Activated CD8-positive, alpha-beta memory T cell treated with anti-CD3 and anti-CD28 coated beads, Interleukin-2, amount 10 ng/mL, durations not matched to agents 7 days and 5 days (primary cell): ENCODE measurements at regions of chr3 and their contacts with region 1.

Region 1: DNA sequence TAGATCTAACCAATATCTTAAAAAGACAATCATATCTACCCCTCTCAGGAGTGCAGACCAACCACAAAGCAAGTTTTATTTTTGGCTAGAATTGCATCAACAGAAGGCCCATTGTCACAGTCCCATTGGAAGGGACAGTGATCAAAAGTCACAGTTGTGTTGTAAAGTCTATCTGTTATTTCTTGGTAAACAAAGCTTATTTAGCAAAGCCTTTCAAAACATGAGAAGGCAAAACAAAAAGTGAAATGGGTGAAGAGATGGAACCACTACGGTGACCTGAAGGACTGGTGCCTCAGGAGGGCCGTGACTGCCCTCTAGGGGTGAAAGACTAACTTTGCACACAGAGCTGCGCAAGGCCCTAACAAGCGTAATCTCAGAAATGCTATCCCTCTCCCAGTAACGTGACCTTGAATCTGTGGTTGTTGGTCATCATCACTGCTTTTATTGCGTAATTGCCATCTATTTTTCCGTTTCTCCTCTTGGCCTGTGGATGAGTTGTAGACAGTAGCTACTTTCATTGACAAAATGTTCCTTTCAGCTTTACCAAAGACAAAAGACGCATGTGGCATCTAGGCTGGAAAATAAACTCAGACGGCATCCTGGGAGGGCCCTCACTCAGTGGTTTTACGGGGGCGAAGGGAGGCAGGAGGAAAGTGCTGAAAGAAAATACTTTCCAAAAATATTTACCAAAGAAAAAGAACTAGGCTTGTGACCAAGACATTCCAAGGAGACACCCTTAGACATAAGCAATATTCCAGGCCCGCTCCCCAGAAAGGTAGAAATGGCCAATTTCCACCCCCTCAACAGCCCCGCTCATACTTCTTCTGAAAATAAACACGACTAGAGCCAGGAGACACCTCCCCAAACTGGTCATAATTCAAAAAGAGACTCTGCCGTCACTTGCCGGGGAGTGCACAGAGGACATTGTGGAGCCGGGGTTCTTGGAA is 79.4 kb downstream of the FRMD4B start:
- DNase-seq: peak; percentile 84
- ATAC-seq: peak; percentile 97
- H3K4me3 Mint-ChIP-seq: peak overlapping the region; percentile 52
- H3K27ac Mint-ChIP-seq: peak overlapping the region; percentile 81
- H3K4me1 Mint-ChIP-seq: peaks cover 19% of the 10 kb centered on the region
- H3K27me3 Mint-ChIP-seq: peaks cover 6% of the 10 kb centered on the region

Region 2: DNA sequence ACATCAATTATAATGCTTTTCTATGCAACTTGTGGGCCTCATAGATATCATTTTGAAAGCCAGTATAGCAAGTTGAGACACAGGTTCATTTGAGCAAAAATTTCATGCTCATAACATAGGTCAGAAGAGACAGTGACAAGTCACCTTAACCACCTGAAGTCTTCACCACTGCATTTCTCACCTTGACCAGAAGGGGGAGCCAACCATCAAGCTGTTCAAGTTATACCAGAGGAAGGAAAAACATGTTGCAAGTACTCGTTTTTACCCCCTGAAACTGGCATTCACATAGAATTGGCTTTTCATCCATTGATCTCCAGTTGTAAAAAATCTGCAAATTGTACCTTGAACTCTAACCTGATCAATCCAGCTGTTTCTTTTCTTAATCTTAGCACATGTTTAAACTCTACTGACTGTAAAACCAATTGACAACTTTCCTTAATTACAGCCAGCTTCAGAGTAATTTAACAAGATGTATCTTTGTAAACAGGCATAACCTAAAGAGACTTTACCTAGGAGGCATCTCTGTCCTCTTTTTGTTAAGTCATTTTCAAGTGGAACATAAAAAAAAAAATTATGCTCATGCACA is 185.5 kb before region 1 on chr3:
- CTCF ChIA-PET with region 1: interaction called, 45 read pairs
- DNase-seq: peak; percentile 90
- ATAC-seq: peak; percentile 87
- H3K4me3 Mint-ChIP-seq: no peak overlapping the region
- H3K27ac Mint-ChIP-seq: peak overlapping the region; percentile 7
- H3K4me1 Mint-ChIP-seq: peaks cover 2% of the 10 kb centered on the region
- H3K27me3 Mint-ChIP-seq: no peaks in the 10 kb centered on the region

Region 3: GRCh38 chr3:69174871-69175737 is 131.4 kb before region 1 on chr3:
- CTCF ChIA-PET with region 1: interaction called, 22 read pairs
- DNase-seq: no peak
- ATAC-seq: no peak
- H3K4me3 Mint-ChIP-seq: no peak overlapping the region
- H3K27ac Mint-ChIP-seq: peak overlapping the region; percentile 46
- H3K4me1 Mint-ChIP-seq: peaks cover 38% of the 10 kb centered on the region
- H3K27me3 Mint-ChIP-seq: no peaks in the 10 kb centered on the region

Region 4: GRCh38 chr3:69191516-69191915 is 115.0 kb before region 1 on chr3:
- CTCF ChIA-PET with region 1: interaction called, 26 read pairs
- DNase-seq: no peak
- ATAC-seq: no peak
- H3K4me3 Mint-ChIP-seq: no peak overlapping the region
- H3K27ac Mint-ChIP-seq: peak overlapping the region; percentile 11
- H3K4me1 Mint-ChIP-seq: peaks cover 54% of the 10 kb centered on the region
- H3K27me3 Mint-ChIP-seq: no peaks in the 10 kb centered on the region

Region 5: DNA sequence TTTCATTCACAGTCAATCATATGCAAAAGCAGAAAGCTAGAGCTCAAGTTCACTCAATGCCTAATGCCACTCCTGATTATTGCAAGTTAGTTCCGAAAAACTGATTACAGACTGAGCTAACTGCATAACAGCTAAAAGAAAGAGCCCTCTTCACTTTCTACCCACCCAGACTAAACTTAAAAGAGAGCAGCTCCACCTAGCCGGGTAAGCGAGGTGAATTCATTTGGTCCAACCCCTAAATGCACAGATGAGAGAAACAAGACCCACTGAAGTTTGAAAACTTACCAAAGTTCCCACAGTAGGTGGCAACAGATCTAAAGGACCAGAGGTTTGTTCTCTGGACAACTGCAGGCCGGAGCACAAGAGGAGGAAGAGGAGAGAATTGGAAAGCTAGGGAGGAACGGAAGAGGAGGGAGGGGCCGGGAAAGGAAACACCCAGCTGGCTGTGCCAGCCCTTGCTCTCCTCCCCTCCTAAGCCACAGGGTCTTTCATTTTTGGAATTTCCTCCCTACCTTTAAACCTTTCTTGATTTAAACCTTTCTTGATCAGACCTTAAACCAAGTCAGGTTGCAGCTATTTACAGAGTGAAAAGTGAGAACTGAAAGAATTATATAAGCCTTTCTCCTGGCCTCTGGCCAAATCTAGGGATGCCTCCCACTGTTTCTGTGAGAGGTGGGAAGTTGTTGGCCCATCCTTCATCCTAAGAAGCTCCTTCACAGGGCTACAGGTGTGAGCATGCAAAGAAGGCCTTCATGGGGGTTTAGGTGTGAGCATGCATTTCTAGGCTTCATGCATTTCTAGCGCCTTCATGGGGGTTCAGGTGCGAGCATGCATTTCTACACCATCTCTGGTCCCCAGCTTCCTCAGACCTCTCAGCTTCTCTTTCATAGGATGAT is 69.5 kb before region 1 on chr3:
- CTCF ChIA-PET with region 1: interaction called, 20 read pairs
- DNase-seq: no peak
- ATAC-seq: peak; percentile 61
- H3K4me3 Mint-ChIP-seq: peak overlapping the region; percentile 48
- H3K27ac Mint-ChIP-seq: peak overlapping the region; percentile 55
- H3K4me1 Mint-ChIP-seq: peaks cover 27% of the 10 kb centered on the region
- H3K27me3 Mint-ChIP-seq: no peaks in the 10 kb centered on the region

Region 6: DNA sequence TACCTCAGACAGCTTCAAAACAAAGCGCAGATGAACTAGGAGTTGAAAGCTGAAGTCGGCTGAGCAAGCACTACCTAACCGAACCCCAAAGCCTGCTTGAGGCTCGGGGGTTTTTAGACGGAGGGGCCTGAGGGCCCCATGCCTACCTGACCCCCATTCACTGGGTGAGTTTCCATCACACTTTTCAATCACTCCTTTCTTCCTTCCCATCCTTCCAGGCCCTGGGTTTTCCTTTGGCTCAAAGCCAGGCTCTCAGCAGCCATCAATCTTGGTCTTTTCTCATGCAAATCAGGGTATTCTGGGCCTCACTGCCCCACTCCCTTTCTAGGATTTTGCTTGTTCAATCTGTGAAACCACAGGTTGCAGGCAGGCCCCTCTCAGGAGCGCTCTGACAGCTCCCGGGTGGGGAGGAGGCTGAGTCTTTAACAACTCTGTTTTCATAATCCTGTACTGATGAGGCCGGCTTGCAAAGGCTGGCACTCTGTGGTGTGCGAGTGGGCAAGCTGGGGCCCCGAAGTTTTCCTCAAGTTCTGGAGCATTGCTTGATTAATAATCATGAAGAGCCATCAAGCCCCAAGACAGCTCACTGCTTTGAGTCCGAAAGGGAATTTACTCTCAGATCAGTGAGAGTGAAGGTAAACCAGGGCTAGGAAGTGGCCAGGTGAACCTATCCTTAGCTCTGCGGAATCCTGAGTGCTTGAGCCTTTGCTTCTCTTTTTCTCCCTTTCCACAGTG is 18.2 kb before region 1 on chr3:
- CTCF ChIA-PET with region 1: interaction called, 15 read pairs
- DNase-seq: peak; percentile 61
- ATAC-seq: peak; percentile 82
- H3K4me3 Mint-ChIP-seq: peak overlapping the region; percentile 48
- H3K27ac Mint-ChIP-seq: peak overlapping the region; percentile 76
- H3K4me1 Mint-ChIP-seq: peaks cover 25% of the 10 kb centered on the region
- H3K27me3 Mint-ChIP-seq: peaks cover 9% of the 10 kb centered on the region

Region 7: DNA sequence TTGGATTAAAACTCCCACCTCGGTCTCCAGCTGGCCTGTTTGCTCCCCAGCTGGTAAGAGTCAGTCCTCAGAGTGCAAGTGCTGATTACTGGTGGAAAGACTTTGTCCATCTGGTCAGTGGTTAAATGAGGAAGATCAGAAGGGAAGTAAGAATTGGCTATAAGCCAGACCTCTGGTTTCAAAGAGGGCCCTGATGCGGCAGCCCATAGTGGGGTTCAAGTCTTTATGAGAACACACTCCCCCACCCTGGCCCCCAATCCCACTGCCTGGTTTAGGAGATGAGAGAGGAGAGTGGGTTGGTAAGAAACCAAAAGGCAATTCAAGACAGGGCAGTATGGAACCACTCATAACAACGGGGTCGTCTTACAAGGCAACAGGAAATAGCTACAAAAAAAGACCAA is 14.4 kb after region 1 on chr3:
- CTCF ChIA-PET with region 1: interaction called, 34 read pairs
- DNase-seq: no peak
- ATAC-seq: no peak
- H3K4me3 Mint-ChIP-seq: no peak overlapping the region
- H3K27ac Mint-ChIP-seq: no peak overlapping the region
- H3K4me1 Mint-ChIP-seq: peaks cover 2% of the 10 kb centered on the region
- H3K27me3 Mint-ChIP-seq: no peaks in the 10 kb centered on the region